ENCODE measurements at regions of chr16 and their contacts with region 1.

Region 1: DNA sequence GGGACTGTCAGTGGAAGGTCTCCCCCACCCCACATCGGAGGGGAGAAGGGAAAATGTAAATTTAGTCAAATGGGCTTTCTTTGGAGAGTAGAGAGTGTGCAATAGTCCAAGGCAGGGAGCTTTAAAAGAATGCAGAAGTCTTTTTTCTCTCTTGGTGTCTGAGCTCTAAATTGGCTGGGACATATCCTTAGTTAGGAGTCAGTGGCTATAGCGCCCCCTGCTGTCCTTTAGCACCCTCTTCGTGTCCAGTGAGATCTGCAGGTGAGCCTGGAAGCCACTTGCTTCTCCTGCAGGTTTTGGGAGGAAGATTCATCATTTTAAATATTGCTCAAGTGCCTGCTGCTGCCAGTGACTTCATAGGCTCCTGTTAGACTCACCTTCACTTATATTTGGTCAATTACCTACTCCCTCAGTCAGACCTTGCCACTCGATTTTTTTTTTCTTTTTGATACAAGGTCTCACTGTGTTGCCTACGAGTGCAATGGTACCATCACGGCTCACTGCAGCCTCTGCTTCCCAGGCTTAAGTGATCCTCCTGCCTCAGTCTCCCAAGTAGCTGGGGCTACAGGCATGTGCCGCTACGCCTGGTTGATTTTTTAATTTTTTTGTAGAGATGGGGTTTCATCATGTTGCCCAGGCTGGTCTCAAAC is 174.8 kb downstream of the PRKCB start:
- DNase-seq: peak; percentile 75 to 92
- ATAC-seq: peak; percentile 80

Region 2: GRCh38 chr16:23781177-23781576 is 229.4 kb before region 1 on chr16:
- intact Hi-C with region 1: no loop called
- DNase-seq: no peak
- ATAC-seq: no peak

Region 3: DNA sequence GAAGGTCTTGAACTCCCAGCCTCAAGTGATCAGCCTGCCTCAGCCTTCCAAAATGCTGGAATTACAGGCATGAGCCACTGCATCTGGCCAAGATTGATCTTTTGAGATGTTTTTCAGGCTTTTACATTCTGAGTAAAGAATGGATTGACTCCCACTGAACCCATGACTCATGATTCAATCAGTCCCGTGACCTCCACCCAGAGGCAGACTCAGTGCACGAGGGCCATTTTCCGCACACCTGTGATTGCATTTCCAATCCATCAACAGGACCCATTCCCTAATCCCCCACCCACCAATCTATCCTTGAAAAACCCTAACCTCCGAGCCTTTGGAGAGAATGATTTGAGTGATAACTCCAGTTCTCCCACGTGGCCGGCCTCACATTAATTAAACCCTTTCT is 215.2 kb before region 1 on chr16:
- intact Hi-C with region 1: loop called (anchors 5 kb)
- DNase-seq: no peak
- ATAC-seq: no peak

Region 4: GRCh38 chr16:23803591-23804123 is 206.9 kb before region 1 on chr16:
- intact Hi-C with region 1: loop called (anchors 5 kb)
- DNase-seq: peak; percentile 72 to 79
- ATAC-seq: peak; percentile 83

Measured in left colon (tissue), 2 donors.